Right cardiac atrium (tissue), 5 donors: ENCODE measurements at regions of chr3 and their contacts with region 1.

Region 1: GRCh38 chr3:124014366-124014942 is 22.5 kb upstream of the ROPN1 start:
- DNase-seq: peak in 1 of 3 donors; percentile 31
- ATAC-seq: no peak
- H3K4me3 ChIP-seq: no peak overlapping the region
- H3K27ac ChIP-seq: no peak overlapping the region
- H3K4me1 ChIP-seq: peaks cover 2% of the 10 kb centered on the region
- H3K27me3 ChIP-seq: no peaks in the 10 kb centered on the region

Region 2: DNA sequence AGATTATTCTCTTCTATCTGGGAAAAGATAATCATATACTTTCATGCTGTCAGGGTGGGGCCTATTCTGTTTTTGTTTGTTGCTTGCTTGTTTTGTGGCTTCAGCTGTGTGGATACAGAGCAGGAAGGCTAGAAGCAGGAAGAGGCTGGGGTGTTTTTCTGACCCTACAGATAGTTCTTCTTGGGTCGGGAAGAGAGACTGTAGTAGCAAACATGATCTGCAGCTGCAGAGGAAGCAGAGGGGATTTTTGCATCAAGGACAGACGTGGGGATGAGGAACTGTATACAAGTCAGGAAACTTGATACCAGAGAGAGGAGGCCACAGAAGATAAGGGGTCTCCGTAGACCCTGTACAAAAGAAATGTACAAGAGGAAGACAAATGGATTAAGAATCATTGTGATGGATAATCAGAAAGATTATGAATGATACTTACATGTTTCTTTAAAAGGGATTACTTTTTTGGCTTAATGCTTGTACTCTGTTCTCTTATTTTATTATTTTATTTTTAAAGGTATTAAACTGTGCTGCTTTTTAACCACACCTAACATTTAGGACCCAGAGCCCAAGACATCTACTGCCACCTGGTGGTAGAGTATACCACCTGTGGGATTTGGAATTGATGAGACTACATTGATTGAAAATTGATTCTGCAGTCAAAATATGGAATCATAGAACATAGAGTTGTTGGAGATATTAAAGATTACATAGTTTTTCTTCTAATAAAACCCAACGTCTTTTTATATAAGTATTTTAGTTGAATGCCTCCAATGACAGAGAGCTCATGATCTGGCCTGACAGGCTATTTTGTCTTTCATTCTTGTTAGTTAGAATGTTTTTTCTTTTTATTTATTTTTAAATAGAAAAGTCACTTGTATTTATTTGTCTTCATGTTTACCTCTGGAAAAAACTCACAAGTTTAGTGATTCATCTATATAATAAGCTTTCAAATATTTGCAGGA is 64.8 kb after region 1 on chr3:
- intact Hi-C with region 1: loop called (anchors 2 to 5 kb)
- DNase-seq: no peak
- ATAC-seq: peak in 1 of 2 donors; percentile 38
- H3K4me3 ChIP-seq: no peak overlapping the region
- H3K27ac ChIP-seq: no peak overlapping the region
- H3K4me1 ChIP-seq: peaks cover 5% of the 10 kb centered on the region
- H3K27me3 ChIP-seq: no peaks in the 10 kb centered on the region

Region 3: DNA sequence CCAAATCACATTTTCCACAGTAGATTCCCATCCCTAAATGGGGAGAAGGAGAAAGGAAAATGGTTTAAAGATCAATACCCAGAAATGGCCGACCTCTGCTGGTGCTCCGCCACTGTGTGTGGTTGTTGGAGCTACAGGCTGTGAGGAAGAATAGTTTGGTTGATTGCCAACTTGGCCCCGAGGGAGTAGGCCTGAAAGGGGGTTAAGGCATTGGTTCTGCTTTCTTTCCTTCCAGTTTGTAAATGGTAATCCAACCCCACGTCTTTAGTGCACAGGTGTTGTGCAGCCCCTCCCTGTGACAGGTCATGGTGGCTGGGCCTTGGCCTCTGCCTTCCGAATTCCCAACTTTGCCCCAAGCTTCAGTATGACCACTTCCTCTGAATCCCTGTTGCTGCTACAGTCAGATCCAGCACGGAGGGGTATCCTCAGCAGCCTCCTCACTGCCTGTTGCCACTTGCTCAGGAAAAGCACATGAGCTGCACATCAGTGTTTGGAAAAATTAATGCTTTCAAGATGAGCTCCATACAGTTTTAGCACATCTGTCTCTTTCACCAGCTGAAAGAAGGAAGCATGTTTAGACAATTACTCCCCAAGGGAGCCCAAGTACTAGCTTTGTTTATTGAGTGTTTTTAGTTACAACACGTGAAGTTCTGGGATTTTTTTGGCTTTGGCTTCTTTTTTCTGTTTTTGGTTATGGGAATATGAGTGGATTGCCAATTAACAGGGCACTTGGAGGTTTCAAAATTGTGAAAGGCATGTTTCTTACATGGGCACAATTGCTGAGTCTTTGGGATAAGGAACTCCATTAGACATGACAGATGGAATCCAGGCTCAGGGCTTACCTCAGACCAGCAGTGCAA is 69.8 kb after region 1 on chr3:
- intact Hi-C with region 1: loop called (anchors 2 to 5 kb)
- DNase-seq: no peak
- ATAC-seq: peak in 1 of 2 donors; percentile 31
- H3K4me3 ChIP-seq: no peak overlapping the region
- H3K27ac ChIP-seq: no peak overlapping the region
- H3K4me1 ChIP-seq: peaks cover 8% of the 10 kb centered on the region
- H3K27me3 ChIP-seq: no peaks in the 10 kb centered on the region

Region 4: DNA sequence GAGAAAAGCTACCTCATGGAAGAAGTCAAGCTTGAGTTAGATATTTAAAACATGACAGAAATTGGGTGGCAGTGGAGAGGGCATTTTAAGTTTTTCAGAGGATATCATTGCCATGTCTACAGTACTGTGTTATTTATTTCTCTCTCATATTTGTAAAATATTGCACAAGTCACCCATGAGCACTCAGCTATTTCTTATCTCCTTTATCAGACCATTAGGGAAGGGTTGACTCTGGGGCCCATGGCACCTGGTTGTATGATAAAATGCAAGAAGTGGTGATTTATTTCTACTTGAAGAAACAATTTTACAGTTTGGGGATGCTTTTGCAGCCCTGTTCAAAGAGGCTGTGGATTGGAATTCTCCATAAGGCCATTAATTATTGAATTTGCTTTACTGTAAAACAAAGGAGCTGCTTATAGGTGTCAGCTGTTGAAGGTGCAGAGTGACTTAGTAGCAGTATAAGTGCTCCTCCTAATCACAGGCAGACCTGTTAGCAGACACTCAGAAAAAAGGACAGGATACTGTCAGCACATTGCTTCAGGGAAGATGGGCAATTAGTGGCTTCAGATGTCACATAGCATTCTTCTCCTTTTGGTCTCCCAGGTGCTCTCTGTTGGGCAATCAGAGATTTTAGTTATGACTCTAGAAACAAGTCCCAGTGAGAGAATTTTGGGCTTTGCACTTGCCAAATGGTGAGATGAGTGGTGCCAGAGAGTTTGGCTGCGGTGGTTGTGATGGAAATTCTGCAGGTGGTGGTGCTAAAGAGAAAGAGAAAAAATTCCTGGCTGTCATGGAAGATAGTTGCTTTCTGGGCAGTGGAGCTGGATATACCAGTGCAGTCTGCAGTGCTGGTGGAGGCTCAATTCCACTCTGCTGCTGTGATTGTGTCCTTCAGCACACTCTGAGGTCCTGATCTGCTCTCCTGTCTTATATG is 107.2 kb after region 1 on chr3:
- intact Hi-C with region 1: no loop called
- DNase-seq: no peak
- ATAC-seq: no peak
- H3K4me3 ChIP-seq: no peak overlapping the region
- H3K27ac ChIP-seq: no peak overlapping the region
- H3K4me1 ChIP-seq: peaks cover 5% of the 10 kb centered on the region
- H3K27me3 ChIP-seq: no peaks in the 10 kb centered on the region

Region 5: DNA sequence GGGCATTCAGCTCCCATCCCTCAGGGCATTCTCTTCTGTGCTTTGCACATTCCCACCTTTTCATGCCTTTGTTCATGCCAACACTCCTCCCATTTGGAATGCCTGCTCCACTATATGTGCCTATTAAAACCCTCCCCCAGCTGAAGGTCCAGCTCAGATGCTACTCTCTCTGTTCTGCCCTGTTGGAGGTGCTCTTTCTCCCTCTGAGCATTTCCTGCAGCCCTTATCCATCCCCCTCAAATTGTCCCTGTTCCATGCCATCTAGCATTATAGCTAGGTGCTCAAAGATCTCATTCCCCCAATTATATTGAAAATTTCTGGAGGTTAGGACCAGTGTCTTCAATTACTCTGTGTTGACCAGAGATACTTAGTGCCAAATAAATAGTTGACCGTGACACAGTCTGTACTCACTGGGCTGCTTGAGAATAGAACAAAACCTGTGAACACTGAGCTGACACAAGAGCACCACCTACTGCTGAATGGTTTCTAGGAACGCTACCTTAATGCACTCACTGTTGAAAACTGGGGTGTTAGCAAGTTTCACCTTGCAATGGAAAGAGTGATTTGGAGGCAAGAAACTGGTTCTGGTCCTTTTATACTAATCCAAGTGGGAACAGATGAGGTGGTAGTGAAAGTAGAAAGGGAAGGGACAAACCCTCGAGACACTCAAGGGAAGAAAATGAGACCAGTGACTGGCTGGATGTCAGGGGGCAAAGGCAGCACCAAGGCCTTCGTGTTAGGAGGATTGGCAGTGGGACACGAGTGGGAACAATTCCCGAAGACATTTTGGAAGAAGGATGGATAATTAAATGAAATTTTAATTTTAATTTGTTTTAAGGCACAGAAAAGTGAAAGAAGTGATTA is 267.2 kb after region 1 on chr3:
- intact Hi-C with region 1: loop called in 2 of 4 experiments (anchors 2 to 10 kb)
- DNase-seq: no peak
- ATAC-seq: peak; percentile 65 to 70
- H3K4me3 ChIP-seq: no peak overlapping the region
- H3K27ac ChIP-seq: no peak overlapping the region
- H3K4me1 ChIP-seq: peaks cover 6% of the 10 kb centered on the region
- H3K27me3 ChIP-seq: no peaks in the 10 kb centered on the region

Region 6: DNA sequence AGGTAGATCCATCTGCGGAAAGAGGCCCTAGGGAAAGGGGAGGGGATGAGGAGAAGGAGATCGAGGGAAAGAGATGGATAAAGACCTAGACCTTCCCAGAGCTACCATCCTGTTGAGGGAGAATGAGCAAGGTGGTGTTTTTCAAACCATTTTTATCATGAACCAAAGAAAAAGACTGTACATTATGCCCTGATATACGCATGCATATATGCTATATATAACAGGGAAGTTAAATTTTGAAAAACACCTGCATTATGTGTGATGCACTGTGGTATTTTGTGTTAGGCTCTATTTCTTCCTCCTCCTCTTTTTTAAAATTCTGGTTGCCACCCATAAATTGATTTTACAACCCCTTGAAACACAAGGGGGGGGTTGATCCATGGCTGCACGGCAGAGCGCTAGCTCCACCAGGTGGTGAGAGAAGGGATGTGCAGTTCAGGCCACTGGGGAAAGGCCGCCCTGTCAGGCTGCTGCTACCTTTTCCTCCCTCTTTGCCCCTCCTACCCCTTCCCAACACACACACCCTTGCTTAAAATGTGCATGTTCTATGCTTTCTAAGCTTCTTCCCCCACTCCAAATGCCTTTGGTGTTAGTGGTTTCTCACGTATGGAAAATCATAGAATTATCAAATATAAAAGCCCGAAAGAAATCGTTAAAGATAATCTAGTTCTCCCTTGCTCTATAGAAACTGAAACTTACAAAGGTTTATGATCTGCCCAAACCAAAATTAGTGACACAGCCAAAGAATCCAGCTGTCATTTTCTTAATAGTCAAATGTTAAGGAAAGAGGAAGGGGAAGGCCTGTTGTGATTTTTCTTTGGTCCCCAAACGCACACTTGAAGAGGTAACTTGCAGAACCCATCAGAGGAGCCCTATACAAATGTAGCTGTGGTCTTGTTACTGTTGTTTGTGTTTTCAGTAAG is 453.8 kb after region 1 on chr3:
- intact Hi-C with region 1: loop called in 1 of 4 experiments (anchors 5 kb)
- DNase-seq: peak; percentile 27 to 63 (median 60)
- ATAC-seq: peak; percentile 69 to 83
- H3K4me3 ChIP-seq: no peak overlapping the region
- H3K27ac ChIP-seq: no peak overlapping the region
- H3K4me1 ChIP-seq: no peaks in the 10 kb centered on the region
- H3K27me3 ChIP-seq: no peaks in the 10 kb centered on the region